WTC11 (cell line): ENCODE measurements at regions of chr5 and their contacts with region 1.

Region 1: DNA sequence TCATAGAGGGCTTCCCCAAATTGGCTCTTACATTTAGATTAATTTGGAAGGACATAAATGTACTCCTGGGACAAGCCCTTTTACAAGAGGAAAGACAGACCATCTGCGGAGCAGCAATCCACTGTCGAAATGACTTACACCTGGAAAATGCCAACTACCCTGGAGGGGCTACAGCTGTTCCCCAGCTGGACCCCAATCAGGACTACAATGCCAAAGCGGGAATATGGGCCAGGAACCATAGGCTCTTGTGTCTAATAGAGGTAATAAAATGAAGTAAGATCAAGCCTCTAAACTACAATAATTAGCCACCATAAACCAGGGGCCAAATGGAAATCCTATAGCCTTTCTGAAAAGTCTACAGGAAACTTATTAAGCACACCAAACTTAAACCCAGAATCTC is 581.3 kb downstream of the PDE4D start:
- DNase-seq: no peak
- ATAC-seq: no peak
- H3K4me3 Mint-ChIP-seq: no peak overlapping the region
- H3K27ac Mint-ChIP-seq: no peak overlapping the region
- H3K4me1 Mint-ChIP-seq: peaks cover 6% of the 10 kb centered on the region
- H3K27me3 Mint-ChIP-seq: no peaks in the 10 kb centered on the region; the same call in none of the 2 replicates
- CTCF ChIP-seq: no peak

Region 2: GRCh38 chr5:59335544-59335943 is 23.3 kb after region 1 on chr5:
- CTCF ChIA-PET with region 1: no interaction called
- POLR2A ChIA-PET with region 1: interaction called, 10 read pairs
- DNase-seq: no peak
- ATAC-seq: no peak
- H3K4me3 Mint-ChIP-seq: no peak overlapping the region
- H3K27ac Mint-ChIP-seq: no peak overlapping the region
- H3K4me1 Mint-ChIP-seq: peaks cover 5% of the 10 kb centered on the region; the same call in 1 of the 2 replicates
- H3K27me3 Mint-ChIP-seq: no peaks in the 10 kb centered on the region
- CTCF ChIP-seq: no peak